GM18951 (cell line): ENCODE measurements at regions of chr16 and their contacts with region 1.

Region 1: DNA sequence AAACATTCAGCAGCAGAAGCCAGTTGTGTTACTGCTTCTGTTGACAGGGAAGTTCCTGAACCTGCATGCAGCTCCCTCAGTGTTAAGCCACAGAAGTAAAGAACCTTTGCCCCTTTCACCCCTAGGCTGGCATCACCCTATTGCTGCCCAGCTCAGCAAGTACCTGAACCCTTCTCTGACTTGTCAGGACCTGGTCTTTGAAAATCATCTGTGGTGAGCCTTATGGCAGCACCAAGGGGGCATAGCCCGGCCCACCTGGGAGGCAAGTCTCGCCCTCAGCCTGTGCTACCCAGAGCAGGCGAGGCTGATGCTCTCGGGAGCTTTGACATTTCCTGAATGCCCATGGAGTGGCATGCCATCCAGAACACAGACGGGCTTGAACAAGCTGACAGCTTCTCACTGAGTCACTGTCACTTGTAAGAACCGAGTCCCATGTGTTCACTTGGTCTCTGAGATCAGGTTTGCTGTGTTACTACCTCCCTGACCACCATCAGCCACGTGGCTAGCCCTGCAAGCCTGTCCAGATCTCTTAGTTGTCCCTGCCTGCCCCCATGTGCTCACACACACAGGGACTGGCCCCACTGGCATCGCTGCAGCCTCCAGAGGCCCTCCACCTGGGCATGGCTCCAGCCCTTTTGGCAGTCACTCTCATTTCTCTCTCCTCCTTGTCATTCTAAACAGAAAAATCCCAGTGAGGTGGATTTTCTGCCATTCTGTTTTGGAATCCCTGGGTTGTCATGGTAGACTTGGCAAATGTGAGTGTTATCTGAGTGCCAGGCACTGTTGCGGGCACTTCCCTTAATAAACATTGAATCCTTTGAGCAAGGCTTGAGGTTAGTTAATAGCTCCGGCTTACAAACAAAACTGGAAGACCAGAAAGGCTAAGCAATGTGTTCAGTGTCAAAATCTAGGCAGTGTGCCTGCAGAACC is 2.9 kb upstream of the CARMIL2 start:
- POLR2A ChIP-seq: no peak

Region 2: GRCh38 chr16:67542464-67543435 is 99.3 kb before region 1 on chr16:
- in situ Hi-C with region 1: loop called (anchors 5 kb)
- POLR2A ChIP-seq: no peak